OCI-LY7 (cell line): ENCODE measurements at regions of chr3 and their contacts with region 1.

Region 1: GRCh38 chr3:181921220-181921619 is 209.5 kb downstream of the SOX2 start:
- DNase-seq: peak; percentile 82
- H3K4me3 ChIP-seq: peak overlapping the region; percentile 44
- H3K27ac ChIP-seq: peak overlapping the region; percentile 79
- H3K4me1 ChIP-seq: peaks cover 62% of the 10 kb centered on the region
- CTCF ChIP-seq: no peak

Region 2: GRCh38 chr3:181823716-181824115 is 97.5 kb before region 1 on chr3:
- CTCF ChIA-PET with region 1: no interaction called
- POLR2A ChIA-PET with region 1: no interaction called
- intact Hi-C with region 1: no loop called
- DNase-seq: no peak
- H3K4me3 ChIP-seq: no peak overlapping the region
- H3K27ac ChIP-seq: no peak overlapping the region
- H3K4me1 ChIP-seq: no peaks in the 10 kb centered on the region
- CTCF ChIP-seq: no peak

Region 3: GRCh38 chr3:181932039-181932438 is 10.8 kb after region 1 on chr3:
- CTCF ChIA-PET with region 1: interaction called, 8 read pairs
- POLR2A ChIA-PET with region 1: interaction called, 49 read pairs
- intact Hi-C with region 1: no loop called
- DNase-seq: peak; percentile 61
- H3K4me3 ChIP-seq: peak overlapping the region; percentile 33
- H3K27ac ChIP-seq: peak overlapping the region; percentile 77
- H3K4me1 ChIP-seq: peaks cover 53% of the 10 kb centered on the region
- CTCF ChIP-seq: no peak

Region 4: GRCh38 chr3:182412065-182412464 is 490.8 kb after region 1 on chr3:
- CTCF ChIA-PET with region 1: no interaction called
- POLR2A ChIA-PET with region 1: no interaction called
- intact Hi-C with region 1: loop called (anchors 5 kb)
- DNase-seq: peak; percentile 55
- H3K4me3 ChIP-seq: peak overlapping the region; percentile 68
- H3K27ac ChIP-seq: peak overlapping the region; percentile 96
- H3K4me1 ChIP-seq: peaks cover 95% of the 10 kb centered on the region
- CTCF ChIP-seq: no peak